Posterior vena cava (tissue), 2 donors: ENCODE measurements at regions of chr5 and their contacts with region 1.

Region 1: GRCh38 chr5:172697123-172698121 is 56.4 kb downstream of the NEURL1B start:
- DNase-seq: peak; percentile 94

Region 2: DNA sequence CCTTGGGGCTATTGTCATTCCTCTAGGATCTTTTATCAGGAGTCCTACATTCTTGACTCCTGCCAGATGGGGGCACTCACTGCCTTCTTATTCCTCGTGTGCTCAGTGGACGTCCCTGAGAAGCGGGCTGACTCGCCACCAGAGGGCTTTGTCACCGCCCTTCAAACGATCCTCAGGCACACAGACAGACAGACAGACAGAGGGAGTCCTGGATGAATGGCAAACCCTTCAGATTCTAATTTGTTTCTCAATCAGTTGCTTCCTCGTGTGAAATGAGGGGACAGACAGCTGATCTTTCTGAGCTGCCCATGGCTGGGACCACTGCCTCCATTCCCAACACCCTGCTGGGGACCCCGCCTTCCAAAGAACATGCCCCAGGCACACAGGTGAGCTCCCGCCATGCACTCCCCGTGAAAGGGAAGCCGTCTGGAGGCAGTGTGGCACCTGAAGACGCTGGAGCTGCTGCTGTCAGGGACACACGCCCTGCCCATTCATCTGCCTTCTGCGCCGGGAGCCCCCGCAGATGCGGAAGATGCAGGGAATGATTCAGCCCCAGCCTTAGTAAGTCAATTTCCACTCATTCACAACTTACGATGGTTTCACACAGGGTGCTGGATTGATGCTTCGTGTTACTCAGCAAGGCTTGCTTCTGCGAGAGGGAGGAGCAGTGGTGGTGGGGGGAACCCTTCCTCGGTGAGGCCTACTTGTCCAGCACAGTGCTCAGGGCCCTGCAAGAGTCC is 218.2 kb before region 1 on chr5:
- intact Hi-C with region 1: loop called (anchors 2 kb)
- DNase-seq: peak; percentile 95

Region 3: DNA sequence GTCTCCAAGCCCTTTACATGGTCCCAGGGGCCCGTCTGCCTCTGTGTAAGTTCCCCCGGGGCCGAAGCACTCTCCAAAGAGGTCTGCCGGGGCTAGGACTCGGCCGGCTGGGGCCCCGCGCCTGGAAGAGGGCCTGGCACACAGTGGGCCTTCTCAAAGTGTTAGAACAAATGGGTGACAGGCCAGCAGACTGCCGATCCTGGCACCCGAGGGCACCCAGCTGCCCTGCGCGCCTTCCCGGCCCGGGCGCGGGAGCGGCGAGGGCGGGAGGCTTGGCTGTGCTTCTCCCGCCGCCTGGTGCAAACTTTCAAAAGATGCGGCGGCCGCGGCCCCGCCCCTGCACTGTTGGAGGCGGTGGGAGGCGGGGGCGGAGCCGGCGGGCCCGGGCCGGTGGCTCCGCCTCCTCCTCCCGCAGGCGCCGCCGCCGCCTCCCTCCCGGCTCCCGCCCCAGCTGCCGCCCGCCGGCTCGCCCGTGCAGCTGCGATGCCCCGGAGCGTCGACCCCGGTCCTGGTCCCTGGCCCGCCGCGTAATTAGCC is 56.5 kb before region 1 on chr5 and contains the start of gene NEURL1B:
- intact Hi-C with region 1: loop called (anchors 5 to 10 kb)
- DNase-seq: peak; percentile 88
- total RNA-seq, gene NEURL1B: 32.9 to 38.6 TPM

Region 4: DNA sequence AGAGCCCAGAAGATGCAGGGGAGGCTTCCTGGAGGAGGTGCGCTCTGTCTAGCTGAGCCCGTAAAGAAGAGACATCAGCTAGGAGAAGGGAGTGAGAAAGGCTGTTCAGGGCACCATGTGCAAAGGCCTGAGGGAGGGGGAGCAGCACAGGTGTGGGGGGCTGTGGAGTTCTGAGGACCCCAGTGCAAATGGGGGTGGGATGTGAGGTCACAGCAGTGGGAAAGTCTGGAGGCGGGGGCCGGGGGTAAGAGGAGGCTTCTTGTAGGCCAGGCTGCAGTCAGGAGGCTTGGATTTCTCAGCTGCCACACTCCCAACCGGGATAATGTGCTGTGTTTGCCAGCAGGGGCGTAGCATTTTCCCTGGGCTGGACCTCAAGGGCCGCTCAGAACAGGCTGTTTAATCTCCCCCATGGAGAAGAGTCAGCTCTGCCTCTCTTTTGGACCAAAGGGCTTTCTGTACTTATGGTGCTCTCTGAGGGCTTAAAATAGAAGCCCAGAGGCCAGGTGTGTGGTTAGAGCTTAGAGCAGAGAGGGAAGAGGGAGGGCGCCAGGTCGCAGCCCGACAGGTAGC is 50.6 kb before region 1 on chr5:
- intact Hi-C with region 1: loop called (anchors 5 to 10 kb)
- DNase-seq: peak; percentile 79

Region 5: DNA sequence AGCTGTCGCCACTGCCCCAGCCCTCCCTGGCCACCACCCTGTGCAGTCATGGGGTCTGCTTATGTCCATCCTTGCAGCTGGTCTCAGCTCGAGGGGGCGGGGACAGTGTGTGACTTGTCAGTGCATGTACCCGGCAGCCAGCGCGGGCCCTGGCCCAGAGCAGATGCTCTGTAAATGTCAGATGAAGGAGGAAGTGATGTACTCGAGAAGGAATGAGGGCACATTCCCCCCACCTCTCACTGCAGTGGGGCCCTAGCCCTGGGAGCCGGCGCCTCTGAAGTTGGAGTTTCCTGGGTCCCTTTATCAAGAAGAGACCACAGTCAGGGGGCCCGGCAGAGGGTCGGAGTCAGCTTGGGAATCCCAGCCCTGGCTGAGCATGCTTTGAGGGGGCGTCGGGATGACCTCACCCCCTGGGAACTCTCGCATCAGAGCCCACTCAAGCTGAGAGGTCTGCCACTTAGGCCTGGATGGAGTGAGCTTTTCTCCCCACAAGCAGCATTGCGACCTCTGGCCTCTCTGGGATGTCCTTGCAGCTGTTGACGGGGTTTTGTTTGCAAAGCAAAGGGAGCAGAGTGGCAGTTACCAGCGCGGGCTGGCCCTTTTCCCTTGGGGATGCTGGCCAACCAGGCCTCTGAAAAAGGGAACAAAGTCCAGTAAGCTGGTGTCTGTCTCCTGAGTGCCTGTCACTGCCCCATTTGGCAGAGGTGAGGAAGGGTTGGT is 37.4 kb before region 1 on chr5:
- intact Hi-C with region 1: loop called in 1 of 2 experiments (anchors 5 kb)
- DNase-seq: peak; percentile 96

Region 6: DNA sequence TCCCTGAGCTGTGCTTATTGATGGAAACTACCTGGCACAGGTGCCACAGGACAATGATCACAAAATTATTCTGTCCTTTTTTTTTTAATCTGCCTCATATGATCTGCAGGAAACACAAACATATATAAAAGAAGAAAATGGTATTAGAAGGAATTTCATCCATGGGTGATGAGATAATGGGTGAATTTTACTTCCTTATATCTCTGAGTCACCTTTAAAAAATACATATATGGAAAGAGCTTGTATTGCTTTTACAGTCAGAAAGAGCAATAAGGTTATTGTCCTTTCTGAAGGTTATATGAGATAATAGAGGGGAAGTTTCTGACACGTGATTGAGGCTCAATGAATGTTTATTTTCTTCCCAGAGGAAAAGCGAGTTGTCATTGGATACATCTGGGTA is 24.7 kb before region 1 on chr5:
- intact Hi-C with region 1: no loop called
- DNase-seq: no peak